Body of pancreas (tissue), 4 donors: ENCODE measurements at regions of chr5 and their contacts with region 1.

Region 1: DNA sequence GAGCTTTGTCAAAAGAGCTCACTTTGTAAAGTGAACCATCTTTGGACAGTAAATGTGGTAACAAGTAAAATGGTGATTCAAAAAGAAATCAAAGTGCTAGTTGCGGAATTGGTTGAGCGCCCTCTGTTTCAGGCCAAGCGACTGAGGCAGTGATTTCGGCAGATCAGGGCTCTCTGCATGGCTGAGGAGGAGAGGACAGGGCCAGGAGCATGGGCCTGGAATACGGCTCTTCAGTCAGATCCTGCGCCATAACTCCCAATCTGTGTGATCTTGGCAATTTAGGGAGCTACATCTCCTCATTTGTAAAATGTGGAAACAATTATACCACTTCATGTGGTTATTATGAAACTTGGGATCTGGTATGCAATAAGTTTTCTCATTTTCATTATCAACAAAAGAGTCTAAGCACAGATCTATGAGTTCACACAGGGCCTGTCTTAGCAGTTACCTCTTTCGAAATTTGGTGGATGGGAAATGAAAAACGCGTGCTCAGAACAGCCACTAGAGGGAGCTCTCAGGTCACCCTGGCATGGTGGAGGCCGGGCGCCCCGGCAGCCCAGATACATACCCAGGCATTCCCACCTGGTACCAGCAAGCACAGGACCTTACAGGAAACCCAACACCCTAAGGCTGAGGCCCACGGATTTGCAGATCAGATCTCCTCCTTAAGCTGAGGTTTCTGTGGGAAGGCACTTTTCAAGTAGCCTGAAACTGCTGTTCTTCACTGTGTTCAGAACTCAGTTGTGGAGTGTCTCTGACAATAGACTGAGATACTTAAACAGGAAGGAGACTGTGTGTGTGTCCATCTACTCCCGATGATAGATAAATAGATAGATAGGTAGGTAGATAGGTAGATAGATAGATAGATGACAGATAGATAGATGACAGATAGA is 303.7 kb downstream of the RAB3C start:
- DNase-seq: peak; percentile 57 to 71 (median 66)
- ATAC-seq: peak; percentile 68
- H3K4me3 ChIP-seq: no peak overlapping the region
- H3K27ac ChIP-seq: no peak overlapping the region
- H3K4me1 ChIP-seq: peaks cover 2% of the 10 kb centered on the region
- H3K27me3 ChIP-seq: no peaks in the 10 kb centered on the region
- CTCF ChIP-seq: peak; percentile 72 to 90 (median 77)
- POLR2A ChIP-seq: no peak

Region 2: DNA sequence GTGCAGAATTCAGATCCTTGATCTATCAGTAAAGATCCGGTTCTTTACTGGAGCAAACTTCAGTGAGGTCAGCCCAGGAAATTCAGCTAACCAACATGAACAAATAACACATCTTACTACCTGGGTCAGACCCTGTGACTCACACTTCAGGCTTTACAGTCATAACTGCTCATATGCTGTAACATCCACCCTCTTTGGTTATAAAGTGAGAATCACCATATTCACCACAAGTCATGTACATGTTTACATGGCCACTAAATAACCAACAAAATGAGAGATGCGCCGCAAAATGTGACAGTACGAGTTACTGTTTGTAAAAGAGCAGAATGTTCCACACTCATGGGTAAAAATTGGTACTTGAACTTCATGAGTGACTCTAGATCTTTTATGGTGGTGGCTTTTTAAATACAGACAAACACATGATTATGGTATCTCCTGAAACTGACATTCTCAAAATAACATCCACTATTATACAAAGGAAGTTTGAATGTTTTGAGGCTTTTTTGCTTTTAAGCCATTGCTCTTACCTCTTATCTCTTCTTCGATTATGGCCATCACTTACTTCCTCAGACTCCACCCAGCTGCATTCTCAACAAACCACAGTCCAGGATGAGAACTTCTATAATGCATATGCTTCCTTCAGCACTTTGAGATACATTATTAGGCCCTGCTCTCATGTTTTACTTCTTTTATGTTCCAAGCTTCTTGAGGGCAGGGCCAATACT is 212.9 kb after region 1 on chr5:
- intact Hi-C with region 1: no loop called
- DNase-seq: peak in 1 of 4 donors; percentile 5
- ATAC-seq: no peak
- H3K4me3 ChIP-seq: no peak overlapping the region
- H3K27ac ChIP-seq: no peak overlapping the region
- H3K4me1 ChIP-seq: no peaks in the 10 kb centered on the region
- H3K27me3 ChIP-seq: no peaks in the 10 kb centered on the region
- CTCF ChIP-seq: no peak
- POLR2A ChIP-seq: no peak

Region 3: DNA sequence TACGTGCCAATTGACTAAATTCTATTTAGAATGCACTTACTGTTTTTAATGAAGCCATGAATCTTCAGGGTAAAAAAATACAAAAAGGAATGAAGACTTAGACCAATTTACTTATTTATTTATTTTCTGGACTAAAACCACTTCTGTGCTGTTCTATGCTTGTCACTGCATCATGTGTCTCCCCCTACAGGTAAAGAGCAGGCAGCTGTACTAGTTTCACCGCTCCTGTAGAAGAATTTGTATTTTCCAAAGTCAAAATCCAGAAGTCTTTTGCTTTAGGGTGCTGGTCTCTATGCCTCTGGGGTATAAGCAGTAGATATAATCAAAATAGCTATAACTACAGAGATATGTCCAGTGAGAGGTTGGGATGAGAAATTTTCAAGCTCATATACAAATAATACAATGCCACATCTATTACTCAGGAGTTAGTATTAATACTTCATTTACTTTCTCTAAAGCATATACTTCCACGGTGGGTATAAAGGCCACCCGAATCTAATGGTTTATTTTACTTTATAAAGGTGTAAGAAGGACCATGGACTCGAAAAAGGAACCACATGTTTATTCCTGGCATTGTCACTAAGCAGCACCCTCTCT is 287.8 kb after region 1 on chr5:
- intact Hi-C with region 1: loop called (anchors 10 kb)
- DNase-seq: peak; percentile 15 to 54 (median 23)
- ATAC-seq: peak; percentile 78
- H3K4me3 ChIP-seq: no peak overlapping the region
- H3K27ac ChIP-seq: no peak overlapping the region
- H3K4me1 ChIP-seq: no peaks in the 10 kb centered on the region
- H3K27me3 ChIP-seq: no peaks in the 10 kb centered on the region
- CTCF ChIP-seq: peak; percentile 22 to 76 (median 68)
- POLR2A ChIP-seq: no peak